Caco-2 (cell line): ENCODE measurements at regions of chr13 and their contacts with region 1.

Region 1: DNA sequence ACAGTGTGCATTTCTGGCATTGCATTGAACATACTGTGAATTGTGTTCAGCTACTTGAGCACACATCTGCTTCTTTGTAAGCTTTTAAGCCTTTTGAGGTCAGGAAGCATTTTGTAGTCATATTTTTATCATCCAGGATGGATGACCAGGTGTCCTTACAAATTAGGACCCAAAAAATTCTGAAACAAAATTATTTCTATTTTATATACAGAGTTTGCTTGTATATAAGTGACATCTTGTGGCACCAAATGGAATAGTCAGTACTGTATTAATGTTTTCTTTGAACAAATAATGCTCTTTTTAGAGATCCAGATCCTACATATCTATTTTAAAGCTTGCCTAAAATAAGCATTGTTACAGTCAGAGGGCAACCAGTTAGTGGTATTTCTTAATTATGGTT is 9.5 kb upstream of the SUPT20H start:
- DNase-seq: no peak
- H3K4me3 ChIP-seq: no peak overlapping the region
- H3K4me3 Mint-ChIP-seq: no peak overlapping the region
- H3K27ac Mint-ChIP-seq: no peak overlapping the region
- H3K4me1 ChIP-seq: no peaks in the 10 kb centered on the region
- H3K4me1 Mint-ChIP-seq: no peaks in the 10 kb centered on the region
- H3K27me3 ChIP-seq: no peaks in the 10 kb centered on the region; the same call in 1 of the 2 replicates
- H3K27me3 Mint-ChIP-seq: peaks cover 8% of the 10 kb centered on the region
- CTCF ChIP-seq: no peak

Region 2: DNA sequence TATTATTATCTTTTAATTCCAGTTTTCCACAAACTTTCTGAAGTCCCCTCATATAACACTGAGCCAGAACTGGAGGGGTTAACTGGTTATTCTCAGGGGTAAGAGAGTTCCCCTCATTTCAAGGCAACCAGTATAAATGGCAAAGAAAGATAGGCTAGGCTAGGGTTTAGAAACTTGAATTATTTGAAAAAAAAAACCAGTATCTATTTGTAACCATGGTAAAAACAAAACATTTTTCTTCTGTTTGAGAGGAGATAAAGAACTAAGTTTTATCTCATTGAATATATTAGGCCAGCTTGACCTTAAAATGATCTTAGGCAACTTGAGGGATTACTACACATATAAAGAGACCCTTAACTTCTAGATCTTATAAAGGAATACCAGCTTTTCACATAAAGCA is 29.1 kb before region 1 on chr13:
- CTCF ChIA-PET with region 1: no interaction called
- POLR2A ChIA-PET with region 1: no interaction called
- intact Hi-C with region 1: loop called (anchors 1 kb)
- DNase-seq: no peak
- H3K4me3 ChIP-seq: no peak overlapping the region
- H3K4me3 Mint-ChIP-seq: no peak overlapping the region
- H3K27ac Mint-ChIP-seq: no peak overlapping the region
- H3K4me1 ChIP-seq: no peaks in the 10 kb centered on the region
- H3K4me1 Mint-ChIP-seq: no peaks in the 10 kb centered on the region
- H3K27me3 ChIP-seq: no peaks in the 10 kb centered on the region
- H3K27me3 Mint-ChIP-seq: no peaks in the 10 kb centered on the region
- CTCF ChIP-seq: no peak

Region 3: DNA sequence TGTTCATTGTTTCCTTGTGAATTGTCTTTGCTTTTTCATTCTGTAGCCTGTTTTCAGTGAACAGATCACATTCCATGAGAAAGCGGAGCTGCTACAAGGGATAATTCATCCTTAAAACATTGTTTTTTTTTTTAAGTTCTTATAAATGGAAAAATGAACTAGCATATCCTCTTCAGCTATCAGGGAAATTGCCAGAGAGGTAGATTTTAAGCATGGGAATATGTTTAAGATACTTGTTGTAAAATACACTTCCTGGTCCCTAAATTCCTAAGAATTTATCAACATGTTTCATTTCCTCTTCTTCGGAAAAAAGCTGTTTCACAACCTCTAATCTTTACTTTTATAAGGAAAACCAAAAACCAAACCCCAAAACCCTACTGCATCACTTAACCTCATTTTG is 291.6 kb after region 1 on chr13:
- CTCF ChIA-PET with region 1: no interaction called
- POLR2A ChIA-PET with region 1: no interaction called
- intact Hi-C with region 1: no loop called
- DNase-seq: no peak
- H3K4me3 ChIP-seq: no peak overlapping the region
- H3K4me3 Mint-ChIP-seq: no peak overlapping the region
- H3K27ac Mint-ChIP-seq: no peak overlapping the region
- H3K4me1 ChIP-seq: no peaks in the 10 kb centered on the region
- H3K4me1 Mint-ChIP-seq: no peaks in the 10 kb centered on the region
- H3K27me3 ChIP-seq: no peaks in the 10 kb centered on the region
- H3K27me3 Mint-ChIP-seq: peaks cover 10% of the 10 kb centered on the region
- CTCF ChIP-seq: no peak